ENCODE measurements at regions of chr17 and their contacts with region 1.

Region 1: GRCh38 chr17:43125133-43125966 is at the start of gene BRCA1:
- DNase-seq: peak; percentile 77
- ATAC-seq: peak; percentile 98
- H3K4me3 Mint-ChIP-seq: peak within 1 kb of the TSS; percentile 98
- H3K27ac Mint-ChIP-seq: peak within 1 kb of the TSS; percentile 90
- H3K4me1 Mint-ChIP-seq: peaks cover 44% of the 10 kb centered on the region
- H3K27me3 Mint-ChIP-seq: no peaks in the 10 kb centered on the region
- CTCF ChIP-seq: no peak
- total RNA-seq, gene BRCA1: 11.9 and 13.3 TPM in 2 replicates

Region 2: GRCh38 chr17:43170766-43171585 is 45.6 kb after region 1 on chr17 and contains the start of gene NBR1:
- CTCF ChIA-PET with region 1: no interaction called
- POLR2A ChIA-PET with region 1: interaction called, 10 read pairs
- intact Hi-C with region 1: loop called (anchors 1 kb)
- DNase-seq: peak; percentile 86
- ATAC-seq: peak; percentile 74
- H3K4me3 Mint-ChIP-seq: no peak within 1 kb of the TSS
- H3K27ac Mint-ChIP-seq: no peak within 1 kb of the TSS
- H3K4me1 Mint-ChIP-seq: peaks cover 13% of the 10 kb centered on the region
- H3K27me3 Mint-ChIP-seq: no peaks in the 10 kb centered on the region
- CTCF ChIP-seq: no peak
- total RNA-seq, gene NBR1: 42.2 and 44.8 TPM in 2 replicates

Region 3: GRCh38 chr17:43490621-43491020 is 365.3 kb after region 1 on chr17:
- CTCF ChIA-PET with region 1: no interaction called
- POLR2A ChIA-PET with region 1: no interaction called
- intact Hi-C with region 1: no loop called
- DNase-seq: no peak
- ATAC-seq: no peak
- H3K4me3 Mint-ChIP-seq: no peak overlapping the region
- H3K27ac Mint-ChIP-seq: no peak overlapping the region
- H3K4me1 Mint-ChIP-seq: peaks cover 10% of the 10 kb centered on the region
- H3K27me3 Mint-ChIP-seq: no peaks in the 10 kb centered on the region
- CTCF ChIP-seq: no peak

Measured in activated B cell treated with CpG ODN at 0.5 μM for 24 hours (primary cell).